ENCODE measurements at regions of chr1 and their contacts with region 1.

Region 1: DNA sequence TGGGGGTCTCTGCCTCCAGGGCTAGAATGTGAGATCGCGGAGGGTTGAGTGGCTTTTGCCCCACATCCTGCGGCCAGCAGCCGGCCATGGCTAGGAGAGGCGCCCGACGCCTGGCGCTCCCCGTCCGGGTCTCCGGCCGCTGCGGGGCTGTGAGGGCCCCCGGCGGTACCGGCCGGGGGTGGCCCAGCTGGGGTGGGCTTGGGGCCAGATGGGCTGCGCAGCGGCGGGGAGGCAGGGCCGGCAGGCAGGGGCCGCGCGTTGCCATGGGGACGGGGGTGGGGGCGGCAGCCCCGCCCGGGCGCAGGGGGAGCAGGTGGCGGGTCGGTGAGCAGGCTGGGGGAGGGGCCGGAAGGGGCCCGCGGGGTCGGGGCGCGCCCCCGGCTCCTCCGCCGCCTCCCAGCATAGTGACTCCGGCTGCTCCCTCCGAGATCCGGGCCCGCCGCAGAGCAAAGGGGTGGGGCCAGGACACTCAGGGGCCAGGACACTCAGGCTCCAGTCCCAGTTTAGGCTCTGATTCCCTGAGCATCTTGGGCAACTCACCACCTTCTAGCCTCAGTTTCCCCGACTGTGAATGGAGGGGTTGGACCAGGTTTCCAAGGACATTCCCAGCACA is 68.6 kb upstream of the SSBP3 start:
- DNase-seq: no peak
- ATAC-seq: no peak
- H3K4me3 ChIP-seq: peak overlapping the region; percentile 4 to 22
- H3K27ac ChIP-seq: no peak overlapping the region
- H3K4me1 ChIP-seq: no peaks in the 10 kb centered on the region
- H3K27me3 ChIP-seq: no peaks in the 10 kb centered on the region

Region 2: DNA sequence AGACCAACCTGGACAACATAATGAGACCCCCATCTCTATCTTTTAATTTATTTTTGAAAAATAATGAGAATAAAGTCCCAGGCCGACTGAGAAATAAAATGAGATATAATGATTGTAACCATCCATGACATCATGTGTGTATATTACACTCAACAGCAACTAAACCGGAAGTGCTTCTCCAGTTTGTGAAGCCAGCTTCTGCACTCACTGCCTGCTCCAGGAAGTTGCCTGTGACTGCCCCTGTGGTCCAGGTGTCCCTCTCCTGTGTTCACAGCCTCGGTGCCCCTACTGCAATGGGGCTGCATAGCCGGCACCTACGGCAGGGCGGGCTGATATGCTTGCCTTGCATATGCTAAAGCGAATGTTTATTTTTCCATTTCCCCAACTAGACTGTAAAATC is 136.8 kb before region 1 on chr1:
- intact Hi-C with region 1: no loop called
- DNase-seq: no peak
- ATAC-seq: no peak
- H3K4me3 ChIP-seq: no peak overlapping the region
- H3K27ac ChIP-seq: no peak overlapping the region
- H3K4me1 ChIP-seq: peaks cover 0 to 2% of the 10 kb centered on the region in 2 donors
- H3K27me3 ChIP-seq: no peaks in the 10 kb centered on the region

Region 3: DNA sequence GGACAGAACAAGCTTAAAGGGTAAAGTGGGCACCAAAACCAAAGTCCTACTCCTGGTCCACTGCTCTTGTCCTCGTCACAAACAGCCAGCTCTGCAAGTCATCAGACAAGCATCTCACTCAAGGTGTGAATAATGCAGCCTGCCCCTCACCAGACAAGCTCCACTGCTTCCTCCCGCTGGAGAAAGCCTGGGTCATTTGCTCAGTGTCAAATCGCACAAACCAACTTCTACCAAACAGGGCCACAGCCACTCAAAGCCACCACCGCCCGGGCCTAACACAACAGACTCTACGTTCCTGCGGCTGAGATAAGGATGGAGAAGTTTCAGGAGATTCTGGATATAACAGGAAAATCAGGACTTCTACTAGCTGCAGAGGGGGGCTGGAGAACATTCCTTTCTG is 71.8 kb before region 1 on chr1:
- intact Hi-C with region 1: no loop called
- DNase-seq: no peak
- ATAC-seq: no peak
- H3K4me3 ChIP-seq: no peak overlapping the region
- H3K27ac ChIP-seq: no peak overlapping the region
- H3K4me1 ChIP-seq: peaks cover 3 to 5% of the 10 kb centered on the region in 2 donors
- H3K27me3 ChIP-seq: no peaks in the 10 kb centered on the region

Region 4: GRCh38 chr1:54413295-54413694 is 61.5 kb before region 1 on chr1:
- intact Hi-C with region 1: loop called in 1 of 2 experiments (anchors 5 kb)
- DNase-seq: peak in 1 of 2 donors; percentile 73
- ATAC-seq: no peak
- H3K4me3 ChIP-seq: no peak overlapping the region
- H3K27ac ChIP-seq: no peak overlapping the region
- H3K4me1 ChIP-seq: no peaks in the 10 kb centered on the region
- H3K27me3 ChIP-seq: no peaks in the 10 kb centered on the region

Region 5: GRCh38 chr1:54709547-54710467 is 235.1 kb after region 1 on chr1:
- intact Hi-C with region 1: no loop called
- DNase-seq: no peak
- ATAC-seq: no peak
- H3K4me3 ChIP-seq: no peak overlapping the region
- H3K27ac ChIP-seq: no peak overlapping the region
- H3K4me1 ChIP-seq: no peaks in the 10 kb centered on the region
- H3K27me3 ChIP-seq: no peaks in the 10 kb centered on the region

Region 6: GRCh38 chr1:55716610-55717009 is 1241.9 kb after region 1 on chr1:
- intact Hi-C with region 1: no loop called
- DNase-seq: no peak
- ATAC-seq: no peak
- H3K4me3 ChIP-seq: no peak overlapping the region
- H3K27ac ChIP-seq: no peak overlapping the region
- H3K4me1 ChIP-seq: peaks cover 5 to 11% of the 10 kb centered on the region in 2 donors
- H3K27me3 ChIP-seq: no peaks in the 10 kb centered on the region

Measured in aorta (tissue), 5 donors.